ENCODE measurements at regions of chr11 and their contacts with region 1.

Region 1: DNA sequence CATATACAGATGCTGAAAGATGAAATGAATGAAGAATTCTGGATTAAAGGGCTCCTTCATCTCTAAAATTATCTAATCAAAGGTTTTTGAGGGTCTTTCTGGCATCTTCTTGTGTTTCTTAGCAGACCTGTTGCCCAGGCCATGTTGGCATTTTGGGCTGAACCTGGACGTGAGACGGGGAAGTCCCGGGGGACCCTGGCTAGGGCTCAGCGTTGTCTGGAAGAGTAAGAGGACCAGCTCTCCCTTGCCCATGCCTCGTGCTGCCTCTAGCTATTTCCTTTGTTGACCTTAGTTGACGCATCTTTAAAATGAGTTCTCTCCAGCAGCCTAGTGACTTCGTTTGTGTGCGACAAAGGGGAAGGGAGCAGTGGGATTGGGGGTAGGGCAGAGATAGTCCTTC is 152.2 kb downstream of the ST3GAL4 start:
- DNase-seq: no peak
- ATAC-seq: no peak
- H3K4me3 ChIP-seq: no peak overlapping the region
- H3K27ac ChIP-seq: no peak overlapping the region
- H3K4me1 ChIP-seq: no peaks in the 10 kb centered on the region
- H3K27me3 ChIP-seq: no peaks in the 10 kb centered on the region; the same call in 1 of the 2 replicates
- CTCF ChIP-seq: no peak
- POLR2A ChIP-seq: no peak
- RAD21 ChIP-seq: no peak

Region 2: GRCh38 chr11:126080161-126080941 is 427.3 kb before region 1 on chr11:
- CTCF ChIA-PET with region 1: no interaction called
- POLR2A ChIA-PET with region 1: no interaction called
- dilution Hi-C with region 1: no loop called
- in situ Hi-C with region 1: no loop called
- intact Hi-C with region 1: no loop called
- DNase-seq: no peak
- ATAC-seq: no peak
- H3K4me3 ChIP-seq: no peak overlapping the region
- H3K27ac ChIP-seq: no peak overlapping the region
- H3K4me1 ChIP-seq: no peaks in the 10 kb centered on the region
- H3K27me3 ChIP-seq: peaks cover 26% of the 10 kb centered on the region
- CTCF ChIP-seq: no peak
- POLR2A ChIP-seq: no peak
- RAD21 ChIP-seq: no peak

Region 3: DNA sequence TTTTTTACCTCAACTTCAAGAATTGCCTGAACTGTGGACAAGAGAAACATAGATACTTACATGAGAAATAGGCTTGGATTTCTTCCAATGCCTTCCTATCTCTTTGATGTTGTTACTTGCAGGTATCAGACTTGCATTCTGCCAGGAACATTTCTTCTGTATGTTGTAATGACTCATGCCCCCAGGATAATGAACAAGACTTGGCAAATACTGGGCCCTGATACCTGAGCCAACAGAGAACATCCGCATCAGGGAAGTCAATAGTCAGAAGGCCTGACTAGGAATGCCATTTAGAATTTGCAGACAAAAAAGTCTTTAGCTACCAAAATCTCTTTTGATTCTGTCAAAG is 766.7 kb after region 1 on chr11:
- CTCF ChIA-PET with region 1: no interaction called
- POLR2A ChIA-PET with region 1: no interaction called
- dilution Hi-C with region 1: no loop called
- in situ Hi-C with region 1: no loop called
- intact Hi-C with region 1: loop called (anchors 5 kb)
- DNase-seq: no peak
- ATAC-seq: no peak
- H3K4me3 ChIP-seq: no peak overlapping the region
- H3K27ac ChIP-seq: no peak overlapping the region
- H3K4me1 ChIP-seq: no peaks in the 10 kb centered on the region
- H3K27me3 ChIP-seq: no peaks in the 10 kb centered on the region
- CTCF ChIP-seq: no peak
- POLR2A ChIP-seq: no peak
- RAD21 ChIP-seq: no peak

Measured in IMR-90 (cell line).